Activated CD8-positive, alpha-beta T cell treated with anti-CD3 and anti-CD28 coated beads for 36 hours (primary cell): ENCODE measurements at regions of chr5 and their contacts with region 1.

Region 1: DNA sequence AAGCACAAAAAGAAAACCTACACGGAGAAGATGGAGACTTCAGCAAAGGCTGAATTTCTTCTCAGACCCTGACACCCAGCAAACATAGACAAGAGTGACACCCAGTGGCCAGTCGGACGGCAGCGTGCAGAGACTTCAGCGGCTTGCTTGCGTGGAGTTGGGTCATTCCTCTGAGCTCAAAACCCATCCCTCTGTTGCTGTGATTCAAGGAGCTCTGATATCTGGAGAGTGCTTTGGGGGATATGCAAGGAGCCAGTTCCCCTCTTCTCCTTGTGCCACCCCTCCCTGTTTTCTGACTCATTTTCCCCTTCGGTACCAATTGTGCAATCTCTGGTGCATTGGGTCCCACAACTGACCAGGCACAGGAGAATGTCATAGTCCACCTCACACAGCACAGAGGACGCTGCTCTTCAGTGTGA is 27.5 kb downstream of the SH3TC2 start:
- DNase-seq: peak; percentile 84
- ATAC-seq: peak; percentile 66
- H3K4me3 Mint-ChIP-seq: no peak overlapping the region
- H3K27ac Mint-ChIP-seq: no peak overlapping the region
- H3K4me1 Mint-ChIP-seq: peaks cover 20% of the 10 kb centered on the region
- H3K27me3 Mint-ChIP-seq: peaks cover 10% of the 10 kb centered on the region
- CTCF ChIP-seq: peak; percentile 78

Region 2: GRCh38 chr5:148826053-148826738 is 209.2 kb before region 1 on chr5 and contains the start of gene ADRB2:
- CTCF ChIA-PET with region 1: interaction called, 5 read pairs
- POLR2A ChIA-PET with region 1: no interaction called
- intact Hi-C with region 1: loop called (anchors 10 kb)
- DNase-seq: peak; percentile 92
- ATAC-seq: peak; percentile 94
- H3K4me3 Mint-ChIP-seq: peak within 1 kb of the TSS; percentile 83
- H3K27ac Mint-ChIP-seq: peak within 1 kb of the TSS; percentile 76
- H3K4me1 Mint-ChIP-seq: peaks cover 28% of the 10 kb centered on the region
- H3K27me3 Mint-ChIP-seq: peaks cover 12% of the 10 kb centered on the region
- CTCF ChIP-seq: no peak
- total RNA-seq, gene ADRB2: 0.81 to 0.98 TPM

Region 3: DNA sequence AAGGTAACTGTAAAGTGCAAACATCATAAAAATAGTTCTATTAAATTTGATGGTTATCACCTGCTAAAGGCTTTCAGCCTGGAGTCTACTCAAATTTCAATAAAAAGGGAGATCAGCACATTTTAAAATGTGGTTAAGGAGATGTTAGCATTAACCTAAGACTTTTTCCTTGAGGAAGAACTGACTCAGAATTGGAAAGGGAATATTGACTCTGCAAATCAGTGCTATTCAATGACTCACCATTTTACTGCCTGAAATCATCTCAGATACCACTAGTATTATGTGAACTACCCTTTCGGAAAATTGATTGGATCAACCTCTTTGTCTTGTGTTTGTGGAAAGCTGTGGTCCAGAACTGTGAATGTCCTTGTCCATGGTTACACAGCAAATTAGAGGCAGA is 95.7 kb before region 1 on chr5:
- CTCF ChIA-PET with region 1: no interaction called
- POLR2A ChIA-PET with region 1: no interaction called
- intact Hi-C with region 1: no loop called
- DNase-seq: no peak
- ATAC-seq: no peak
- H3K4me3 Mint-ChIP-seq: no peak overlapping the region
- H3K27ac Mint-ChIP-seq: no peak overlapping the region
- H3K4me1 Mint-ChIP-seq: no peaks in the 10 kb centered on the region
- H3K27me3 Mint-ChIP-seq: peaks cover under 1% of the 10 kb centered on the region
- CTCF ChIP-seq: no peak

Region 4: DNA sequence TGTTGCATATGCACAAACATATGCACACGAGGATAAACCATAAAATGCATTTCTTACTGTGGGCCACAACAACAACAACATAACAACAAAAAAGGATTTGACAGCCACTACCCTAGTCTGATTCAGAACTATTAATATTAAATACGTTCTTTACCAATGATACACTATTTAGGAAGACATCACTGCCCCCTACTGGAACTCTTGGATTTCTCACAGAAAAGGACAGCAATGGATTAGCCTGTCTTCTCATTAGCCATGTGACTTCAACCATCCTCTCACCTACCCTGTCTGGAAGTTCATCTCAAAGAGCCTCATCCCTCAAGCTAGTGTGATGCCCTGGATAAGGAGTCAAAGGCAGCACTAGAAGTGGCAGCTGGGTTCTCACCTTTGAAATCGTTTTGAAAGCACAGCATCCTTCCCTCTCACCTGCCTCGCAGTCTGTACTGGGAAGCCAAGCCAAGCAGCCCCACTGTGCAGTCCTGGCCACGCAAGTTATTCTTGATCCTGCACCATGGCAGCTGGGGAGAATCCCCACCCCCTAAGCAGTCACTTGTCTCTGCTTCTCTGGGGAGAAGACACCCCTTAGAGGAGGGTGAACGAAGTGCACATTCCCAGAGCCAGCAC is 37.1 kb before region 1 on chr5:
- CTCF ChIA-PET with region 1: interaction called, 10 read pairs
- POLR2A ChIA-PET with region 1: interaction called, 3 read pairs
- intact Hi-C with region 1: no loop called
- DNase-seq: peak; percentile 25
- ATAC-seq: peak; percentile 67
- H3K4me3 Mint-ChIP-seq: no peak overlapping the region
- H3K27ac Mint-ChIP-seq: no peak overlapping the region
- H3K4me1 Mint-ChIP-seq: no peaks in the 10 kb centered on the region
- H3K27me3 Mint-ChIP-seq: peaks cover 30% of the 10 kb centered on the region
- CTCF ChIP-seq: peak; percentile 71

Region 5: GRCh38 chr5:149024477-149024876 is 10.9 kb before region 1 on chr5:
- CTCF ChIA-PET with region 1: interaction called, 18 read pairs
- POLR2A ChIA-PET with region 1: no interaction called
- intact Hi-C with region 1: no loop called
- DNase-seq: no peak
- ATAC-seq: no peak
- H3K4me3 Mint-ChIP-seq: no peak overlapping the region
- H3K27ac Mint-ChIP-seq: no peak overlapping the region
- H3K4me1 Mint-ChIP-seq: no peaks in the 10 kb centered on the region
- H3K27me3 Mint-ChIP-seq: peaks cover 5% of the 10 kb centered on the region
- CTCF ChIP-seq: no peak

Region 6: GRCh38 chr5:149056616-149057165 is 21.3 kb after region 1 on chr5:
- CTCF ChIA-PET with region 1: interaction called, 12 read pairs
- POLR2A ChIA-PET with region 1: no interaction called
- intact Hi-C with region 1: no loop called
- DNase-seq: no peak
- ATAC-seq: no peak
- H3K4me3 Mint-ChIP-seq: no peak overlapping the region
- H3K27ac Mint-ChIP-seq: no peak overlapping the region
- H3K4me1 Mint-ChIP-seq: no peaks in the 10 kb centered on the region
- H3K27me3 Mint-ChIP-seq: peaks cover 12% of the 10 kb centered on the region
- CTCF ChIP-seq: no peak

Region 7: DNA sequence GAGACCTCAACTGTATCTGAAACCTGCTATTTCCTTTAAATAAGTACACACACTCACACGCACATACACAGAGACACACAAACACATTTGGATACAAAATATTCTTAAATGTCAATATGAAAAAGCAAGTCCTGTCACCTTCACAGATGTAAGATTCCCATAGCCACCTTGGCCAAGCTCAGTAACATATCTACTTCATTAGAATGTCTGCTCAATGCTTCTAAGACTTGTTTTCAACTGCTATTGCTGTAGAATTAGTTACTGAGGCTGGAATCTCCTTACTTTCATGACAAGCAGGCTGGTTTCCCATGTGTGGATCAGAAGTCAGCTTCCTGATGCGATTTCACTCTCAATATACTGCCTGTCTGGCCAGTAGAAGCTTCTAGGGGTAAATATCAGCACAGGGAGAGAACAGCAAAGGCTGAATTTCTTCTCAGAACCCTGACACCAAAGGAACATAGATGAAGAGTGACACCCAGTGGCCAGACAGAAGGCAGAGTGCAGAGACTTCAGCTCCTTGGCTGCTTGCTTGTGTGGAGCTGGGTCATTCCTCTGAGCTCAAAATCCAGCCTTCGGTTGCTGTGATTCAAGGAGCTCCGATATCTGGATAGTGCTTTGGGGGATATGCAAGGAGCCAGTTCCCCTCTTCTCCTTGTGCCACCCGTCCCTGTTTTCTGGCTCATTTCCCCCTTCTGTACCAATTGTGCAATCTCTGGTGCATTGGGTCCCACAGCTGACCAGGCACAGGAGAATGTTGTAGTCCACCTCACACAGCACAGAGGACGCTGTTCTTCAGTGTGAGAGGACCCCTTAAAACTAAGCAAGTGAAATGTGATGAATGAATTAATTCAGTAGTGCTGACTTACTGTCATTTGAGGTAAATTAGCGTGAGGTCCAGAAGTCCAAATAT is 79.3 kb after region 1 on chr5:
- CTCF ChIA-PET with region 1: interaction called, 29 read pairs
- POLR2A ChIA-PET with region 1: no interaction called
- intact Hi-C with region 1: no loop called
- DNase-seq: peak; percentile 58
- ATAC-seq: peak; percentile 64
- H3K4me3 Mint-ChIP-seq: no peak overlapping the region
- H3K27ac Mint-ChIP-seq: no peak overlapping the region
- H3K4me1 Mint-ChIP-seq: no peaks in the 10 kb centered on the region
- H3K27me3 Mint-ChIP-seq: peaks cover 18% of the 10 kb centered on the region
- CTCF ChIP-seq: peak; percentile 60

Region 8: GRCh38 chr5:149162401-149163084 is 127.2 kb after region 1 on chr5:
- CTCF ChIA-PET with region 1: no interaction called
- POLR2A ChIA-PET with region 1: no interaction called
- intact Hi-C with region 1: no loop called
- DNase-seq: no peak
- ATAC-seq: no peak
- H3K4me3 Mint-ChIP-seq: no peak overlapping the region
- H3K27ac Mint-ChIP-seq: no peak overlapping the region
- H3K4me1 Mint-ChIP-seq: no peaks in the 10 kb centered on the region
- H3K27me3 Mint-ChIP-seq: peaks cover 5% of the 10 kb centered on the region
- CTCF ChIP-seq: no peak